ENCODE measurements at regions of chr6 and their contacts with region 1.

Region 1: DNA sequence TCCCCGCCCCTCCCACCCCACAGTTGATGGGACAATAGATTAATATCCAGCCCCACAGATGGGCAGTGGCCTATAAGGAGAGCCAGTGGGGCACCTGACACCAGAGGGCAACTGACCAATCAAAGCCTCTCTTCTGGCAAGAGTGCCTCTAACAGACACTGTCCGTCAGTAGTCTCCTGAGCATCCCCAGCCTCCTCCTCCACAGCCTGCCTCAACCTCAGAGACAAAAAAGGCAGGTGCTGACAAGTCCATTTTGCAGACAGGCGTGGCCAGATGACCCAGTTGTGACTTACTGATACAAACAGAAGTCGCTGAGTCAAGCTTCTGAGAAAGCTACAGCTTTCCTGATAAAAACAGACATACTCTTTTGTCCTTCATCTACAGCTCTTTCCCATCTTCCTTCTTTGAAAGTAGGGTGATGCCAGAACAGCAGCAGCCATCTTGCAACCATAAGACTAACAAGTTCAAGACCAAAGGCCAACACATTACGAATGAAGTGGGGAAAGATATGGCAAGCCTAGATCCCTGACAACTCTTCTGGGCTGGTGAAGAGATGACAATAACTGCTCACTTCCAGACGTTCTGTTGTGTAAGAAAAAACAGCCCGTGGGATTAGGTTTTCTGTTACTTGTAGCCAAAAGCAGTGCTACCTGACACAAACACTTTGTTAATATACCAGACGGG is 12.3 kb downstream of the PPIL1 start:
- DNase-seq: no peak
- H3K4me3 ChIP-seq: no peak overlapping the region
- H3K27ac ChIP-seq: no peak overlapping the region
- H3K27me3 ChIP-seq: no peaks in the 10 kb centered on the region
- CTCF ChIP-seq: no peak

Region 2: DNA sequence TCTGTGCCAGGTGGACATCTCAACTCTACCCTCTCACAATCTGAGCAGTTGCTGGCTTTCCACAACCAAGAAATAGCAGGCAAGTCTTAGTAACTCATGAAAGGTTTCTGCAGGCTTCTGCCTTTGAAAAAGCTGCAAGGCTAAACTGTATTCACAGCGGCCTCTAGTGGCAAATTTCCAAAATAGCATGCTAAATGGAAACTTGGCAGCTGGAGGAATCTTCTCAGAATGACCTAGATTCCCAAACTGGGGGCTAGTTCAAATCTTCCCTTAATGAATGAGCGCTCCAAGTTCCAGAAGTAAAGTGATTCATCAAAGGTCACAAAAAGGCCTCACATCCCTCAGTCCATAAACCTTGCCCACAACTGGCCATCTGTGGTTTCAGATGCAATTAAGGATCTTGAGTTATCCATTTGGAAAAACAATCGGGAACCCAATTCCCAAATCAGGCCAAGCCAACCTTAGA is 11.1 kb before region 1 on chr6:
- CTCF ChIA-PET with region 1: interaction called, 17 read pairs
- POLR2A ChIA-PET with region 1: no interaction called
- DNase-seq: peak; percentile 21
- H3K4me3 ChIP-seq: no peak overlapping the region
- H3K27ac ChIP-seq: peak overlapping the region; percentile 31
- H3K27me3 ChIP-seq: no peaks in the 10 kb centered on the region
- CTCF ChIP-seq: peak; percentile 72

Region 3: DNA sequence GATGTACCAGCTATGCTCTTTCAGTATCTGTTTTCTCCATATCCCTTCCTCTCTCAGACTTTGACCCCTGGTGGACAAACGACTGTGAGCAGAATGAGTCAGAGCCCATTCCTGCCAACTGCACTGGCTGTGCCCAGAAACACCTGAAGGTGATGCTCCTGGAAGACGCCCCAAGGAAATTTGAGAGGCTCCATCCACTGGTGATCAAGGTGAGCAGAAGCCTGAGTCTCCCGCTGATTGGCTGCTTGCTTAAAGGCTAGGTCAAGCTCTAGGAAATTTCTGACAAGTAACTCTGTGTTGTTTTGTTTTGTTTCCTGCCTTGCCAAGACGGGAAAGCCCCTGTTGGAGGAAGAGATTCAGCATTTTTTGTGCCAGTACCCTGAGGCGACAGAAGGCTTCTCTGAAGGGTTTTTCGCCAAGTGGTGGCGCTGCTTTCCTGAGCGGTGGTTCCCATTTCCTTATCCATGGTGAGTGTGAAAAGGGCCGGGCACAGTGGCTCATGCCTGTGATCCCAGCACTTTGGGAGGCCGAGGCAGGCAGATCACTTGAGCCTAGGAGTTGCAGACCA is 52.0 kb after region 1 on chr6:
- CTCF ChIA-PET with region 1: no interaction called
- POLR2A ChIA-PET with region 1: no interaction called
- DNase-seq: no peak
- H3K4me3 ChIP-seq: no peak overlapping the region
- H3K27ac ChIP-seq: no peak overlapping the region
- H3K27me3 ChIP-seq: no peaks in the 10 kb centered on the region
- CTCF ChIP-seq: peak; percentile 44